ENCODE measurements at regions of chr3 and their contacts with region 1.

Region 1: DNA sequence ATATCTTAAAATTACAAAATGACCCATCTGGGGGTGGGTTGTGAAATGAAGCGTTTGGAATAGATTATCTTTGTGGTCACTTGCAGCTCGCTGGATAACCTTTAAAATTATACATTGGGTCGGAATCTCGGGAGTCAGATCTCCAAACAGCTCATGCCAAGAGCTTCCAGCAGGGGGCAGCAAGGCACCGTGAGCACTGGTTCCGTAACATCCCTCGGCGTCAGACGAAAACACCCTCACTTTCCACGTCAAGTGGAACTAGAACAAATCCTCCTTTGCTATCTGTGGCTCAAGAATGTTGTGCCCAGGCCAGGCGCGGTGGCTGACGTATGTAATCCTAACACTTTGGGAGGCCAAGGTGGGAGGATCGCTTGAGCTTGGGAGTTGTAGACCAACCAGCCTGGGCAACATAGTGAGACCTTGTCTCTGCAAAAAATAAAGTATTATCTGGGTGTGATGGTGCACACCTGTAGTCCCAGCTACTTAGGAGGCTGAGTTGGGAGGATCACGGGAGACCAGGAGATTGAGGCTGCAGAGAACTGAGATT is 31.1 kb downstream of the UMPS start:
- DNase-seq: peak; percentile 75 to 80
- H3K4me3 ChIP-seq: no peak overlapping the region
- H3K4me3 Mint-ChIP-seq: peak overlapping the region; percentile 38
- H3K27ac Mint-ChIP-seq: peak overlapping the region; percentile 44
- H3K4me1 ChIP-seq: peaks cover 9% of the 10 kb centered on the region
- H3K4me1 Mint-ChIP-seq: peaks cover 21% of the 10 kb centered on the region
- H3K27me3 ChIP-seq: no peaks in the 10 kb centered on the region
- H3K27me3 Mint-ChIP-seq: no peaks in the 10 kb centered on the region
- CTCF ChIP-seq: peak; percentile 92 to 94

Region 2: GRCh38 chr3:124826703-124827102 is 65.4 kb after region 1 on chr3:
- CTCF ChIA-PET with region 1: no interaction called
- POLR2A ChIA-PET with region 1: no interaction called
- intact Hi-C with region 1: no loop called
- DNase-seq: no peak
- H3K4me3 ChIP-seq: no peak overlapping the region
- H3K4me3 Mint-ChIP-seq: no peak overlapping the region
- H3K27ac Mint-ChIP-seq: no peak overlapping the region
- H3K4me1 ChIP-seq: peaks cover under 1% of the 10 kb centered on the region
- H3K4me1 Mint-ChIP-seq: peaks cover 23% of the 10 kb centered on the region
- H3K27me3 ChIP-seq: no peaks in the 10 kb centered on the region
- H3K27me3 Mint-ChIP-seq: no peaks in the 10 kb centered on the region
- CTCF ChIP-seq: no peak

Region 3: GRCh38 chr3:124887177-124887931 is 126.0 kb after region 1 on chr3 and contains the start of gene ITGB5:
- CTCF ChIA-PET with region 1: interaction called, 6 read pairs
- POLR2A ChIA-PET with region 1: interaction called, 6 read pairs
- intact Hi-C with region 1: loop called (anchors 5 kb)
- DNase-seq: peak; percentile 88 to 90
- H3K4me3 ChIP-seq: peak within 1 kb of the TSS; percentile 69
- H3K4me3 Mint-ChIP-seq: peak within 1 kb of the TSS; percentile 94
- H3K27ac Mint-ChIP-seq: peak within 1 kb of the TSS; percentile 88
- H3K4me1 ChIP-seq: peaks cover 29% of the 10 kb centered on the region
- H3K4me1 Mint-ChIP-seq: peaks cover 17% of the 10 kb centered on the region
- H3K27me3 ChIP-seq: no peaks in the 10 kb centered on the region
- H3K27me3 Mint-ChIP-seq: no peaks in the 10 kb centered on the region
- CTCF ChIP-seq: no peak
- total RNA-seq, gene ITGB5: 123 and 132 TPM in 2 replicates

Region 4: DNA sequence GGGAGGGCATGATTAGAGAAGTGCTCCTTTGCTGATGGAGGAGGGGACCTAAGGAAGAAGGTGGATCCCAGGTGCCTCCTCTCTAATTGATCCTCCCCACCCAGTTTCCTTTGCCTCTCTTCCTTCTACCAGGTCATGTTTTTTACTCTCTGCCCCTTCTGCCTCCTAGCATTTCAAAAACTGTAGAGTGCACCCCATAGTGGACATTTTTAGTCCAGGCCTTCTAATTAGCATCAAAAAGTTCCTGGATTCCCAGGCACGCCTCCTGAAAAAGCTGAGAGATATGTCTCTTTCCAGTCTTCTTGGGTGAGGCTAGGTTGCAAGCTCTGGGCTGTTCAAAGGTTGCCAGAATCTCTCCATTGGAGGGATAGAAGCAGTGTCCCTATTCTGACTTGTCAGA is 144.5 kb after region 1 on chr3:
- CTCF ChIA-PET with region 1: interaction called, 26 read pairs
- POLR2A ChIA-PET with region 1: no interaction called
- intact Hi-C with region 1: loop called (anchors 1 kb)
- DNase-seq: no peak
- H3K4me3 ChIP-seq: no peak overlapping the region
- H3K4me3 Mint-ChIP-seq: no peak overlapping the region
- H3K27ac Mint-ChIP-seq: no peak overlapping the region
- H3K4me1 ChIP-seq: no peaks in the 10 kb centered on the region; the same call in 1 of the 2 replicates
- H3K4me1 Mint-ChIP-seq: no peaks in the 10 kb centered on the region
- H3K27me3 ChIP-seq: no peaks in the 10 kb centered on the region
- H3K27me3 Mint-ChIP-seq: no peaks in the 10 kb centered on the region
- CTCF ChIP-seq: peak in 1 of 2 experiments; percentile 25

Region 5: GRCh38 chr3:124986158-124987143 is 225.1 kb after region 1 on chr3:
- CTCF ChIA-PET with region 1: interaction called, 4 read pairs
- POLR2A ChIA-PET with region 1: no interaction called
- intact Hi-C with region 1: loop called (anchors 5 kb)
- DNase-seq: peak in 1 of 2 experiments; percentile 40
- H3K4me3 ChIP-seq: no peak overlapping the region
- H3K4me3 Mint-ChIP-seq: no peak overlapping the region
- H3K27ac Mint-ChIP-seq: peak overlapping the region; percentile 32
- H3K4me1 ChIP-seq: no peaks in the 10 kb centered on the region; the same call in 1 of the 2 replicates
- H3K4me1 Mint-ChIP-seq: peaks cover 8% of the 10 kb centered on the region
- H3K27me3 ChIP-seq: no peaks in the 10 kb centered on the region
- H3K27me3 Mint-ChIP-seq: no peaks in the 10 kb centered on the region
- CTCF ChIP-seq: peak; percentile 67 to 72

Region 6: DNA sequence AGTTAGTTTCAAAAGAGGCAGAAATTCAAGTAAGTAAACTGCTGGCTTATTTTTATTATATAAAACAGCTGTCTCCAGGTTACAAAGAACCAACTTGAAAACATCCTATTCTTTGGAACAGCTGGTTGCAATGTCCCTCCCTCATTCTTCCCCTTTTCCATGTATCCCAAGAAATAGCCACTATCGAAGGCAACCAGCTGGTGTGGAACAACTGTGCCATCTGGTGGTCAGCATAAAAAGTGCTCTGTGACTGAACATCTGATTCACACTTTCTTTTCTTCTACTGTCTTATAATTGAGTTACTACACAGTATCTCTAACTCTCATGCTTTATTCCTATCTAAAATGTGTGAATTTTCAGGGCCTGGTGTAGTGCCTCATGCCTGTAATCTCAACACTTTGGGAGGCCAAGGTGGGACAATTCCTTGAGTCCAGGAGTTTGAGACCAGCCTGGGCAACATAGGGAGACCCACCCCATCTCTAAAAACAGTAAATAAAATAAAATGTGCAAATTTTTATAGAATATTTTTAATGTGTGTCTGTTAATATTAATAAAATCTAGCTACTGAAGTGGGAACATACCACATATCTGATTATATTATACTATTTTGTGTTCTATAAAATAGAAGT is 824.4 kb after region 1 on chr3:
- CTCF ChIA-PET with region 1: no interaction called
- POLR2A ChIA-PET with region 1: no interaction called
- intact Hi-C with region 1: loop called (anchors 5 kb)
- DNase-seq: peak; percentile 56 to 66
- H3K4me3 ChIP-seq: no peak overlapping the region
- H3K4me3 Mint-ChIP-seq: no peak overlapping the region
- H3K27ac Mint-ChIP-seq: no peak overlapping the region
- H3K4me1 ChIP-seq: peaks cover 3% of the 10 kb centered on the region
- H3K4me1 Mint-ChIP-seq: peaks cover 7% of the 10 kb centered on the region
- H3K27me3 ChIP-seq: no peaks in the 10 kb centered on the region
- H3K27me3 Mint-ChIP-seq: no peaks in the 10 kb centered on the region
- CTCF ChIP-seq: peak; percentile 75 to 85